ENCODE measurements at regions of chr2 and their contacts with region 1.

Region 1: GRCh38 chr2:9843229-9844035 is at the start of gene TAF1B:
- DNase-seq: peak; percentile 55 to 87 (median 74)
- H3K4me3 ChIP-seq: peak within 1 kb of the TSS; percentile 50 to 98 (median 80)
- H3K27ac ChIP-seq: peak within 1 kb of the TSS in 58 of 59 donors; percentile 14 to 94 (median 73)
- H3K27me3 ChIP-seq: no peaks in the 10 kb centered on the region
- CTCF ChIP-seq: peak in 34 of 56 donors; percentile 4 to 69 (median 34)
- total RNA-seq, gene TAF1B: 9.0 to 34.9 (median 19.6) TPM

Region 2: GRCh38 chr2:9644603-9645002 is 198.8 kb before region 1 on chr2:
- intact Hi-C with region 1: no loop called
- DNase-seq: no peak
- H3K4me3 ChIP-seq: no peak overlapping the region
- H3K27ac ChIP-seq: peak overlapping the region in 3 of 59 donors; percentile 5 to 55 (median 19)
- H3K27me3 ChIP-seq: no peaks in the 10 kb centered on the region
- CTCF ChIP-seq: no peak

Region 3: GRCh38 chr2:9813312-9814133 is 29.9 kb before region 1 on chr2:
- intact Hi-C with region 1: loop called in 1 of 2 experiments (anchors 1 kb)
- DNase-seq: peak in 9 of 10 donors; percentile 61 to 80 (median 66)
- H3K4me3 ChIP-seq: peak overlapping the region in 46 of 59 donors; percentile 3 to 60 (median 34)
- H3K27ac ChIP-seq: no peak overlapping the region
- H3K27me3 ChIP-seq: peaks cover 0 to 4% (median 0%) of the 10 kb centered on the region in 45 donors
- CTCF ChIP-seq: peak; percentile 75 to 97 (median 89)

Region 4: GRCh38 chr2:9877733-9878125 is 34.3 kb after region 1 on chr2:
- intact Hi-C with region 1: no loop called
- DNase-seq: no peak
- H3K4me3 ChIP-seq: no peak overlapping the region
- H3K27ac ChIP-seq: no peak overlapping the region
- H3K27me3 ChIP-seq: no peaks in the 10 kb centered on the region
- CTCF ChIP-seq: no peak

Region 5: GRCh38 chr2:9951272-9951972 is 108.0 kb after region 1 on chr2 and contains the start of gene GRHL1:
- intact Hi-C with region 1: loop called (anchors 5 kb)
- DNase-seq: peak; percentile 82 to 98 (median 90)
- H3K4me3 ChIP-seq: peak within 1 kb of the TSS; percentile 47 to 87 (median 73)
- H3K27ac ChIP-seq: peak within 1 kb of the TSS in 32 of 59 donors; percentile 26 to 81 (median 66)
- H3K27me3 ChIP-seq: peaks cover 0 to 2% (median 0%) of the 10 kb centered on the region in 45 donors
- CTCF ChIP-seq: peak in 15 of 56 donors; percentile 4 to 57 (median 16)
- total RNA-seq, gene GRHL1: 1.6 to 10.9 (median 6.4) TPM